Left cardiac atrium (tissue), 4 donors: ENCODE measurements at regions of chr6 and their contacts with region 1.

Region 1: DNA sequence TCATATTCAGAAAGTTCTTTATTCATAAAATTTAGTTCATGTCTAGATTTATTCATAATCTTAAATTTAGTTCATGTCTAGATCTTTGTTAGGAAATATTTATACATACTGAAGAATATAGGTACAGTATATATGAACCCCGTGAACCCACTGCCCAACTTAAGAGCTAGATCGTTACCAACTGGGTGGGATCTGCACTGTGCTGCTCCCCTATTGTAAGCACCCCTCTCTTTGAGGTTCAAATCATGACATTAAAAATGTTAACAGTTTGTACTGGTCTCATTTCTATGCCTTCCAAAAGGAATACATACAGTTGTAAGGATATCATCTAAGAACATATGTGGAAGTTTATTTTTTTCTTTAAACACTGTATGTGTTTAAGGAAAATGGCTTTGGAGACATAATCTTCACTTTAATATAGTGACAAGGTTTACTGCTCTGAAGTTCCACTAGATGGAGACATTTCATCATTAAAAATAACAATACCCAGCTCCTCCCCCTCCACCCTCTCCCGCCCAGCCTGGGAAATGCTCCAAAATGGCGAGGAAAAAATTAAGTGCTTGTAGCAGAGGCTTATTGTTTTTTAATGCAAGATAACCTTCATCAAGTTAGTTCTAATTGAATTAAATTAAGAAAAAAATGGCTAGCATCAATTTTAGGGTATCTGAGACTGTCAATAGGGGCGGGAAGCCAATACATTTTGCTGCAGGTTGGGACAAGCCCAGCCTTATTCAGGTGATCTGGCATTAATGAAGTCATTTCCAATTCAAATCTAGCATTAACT is 104.1 kb upstream of the TRAF3IP2 start:
- DNase-seq: peak; percentile 63
- ATAC-seq: peak; percentile 78 to 85

Region 2: GRCh38 chr6:111781041-111781708 is 71.4 kb after region 1 on chr6:
- intact Hi-C with region 1: loop called in 1 of 2 experiments (anchors 10 kb)
- DNase-seq: no peak
- ATAC-seq: peak; percentile 45 to 61

Region 3: DNA sequence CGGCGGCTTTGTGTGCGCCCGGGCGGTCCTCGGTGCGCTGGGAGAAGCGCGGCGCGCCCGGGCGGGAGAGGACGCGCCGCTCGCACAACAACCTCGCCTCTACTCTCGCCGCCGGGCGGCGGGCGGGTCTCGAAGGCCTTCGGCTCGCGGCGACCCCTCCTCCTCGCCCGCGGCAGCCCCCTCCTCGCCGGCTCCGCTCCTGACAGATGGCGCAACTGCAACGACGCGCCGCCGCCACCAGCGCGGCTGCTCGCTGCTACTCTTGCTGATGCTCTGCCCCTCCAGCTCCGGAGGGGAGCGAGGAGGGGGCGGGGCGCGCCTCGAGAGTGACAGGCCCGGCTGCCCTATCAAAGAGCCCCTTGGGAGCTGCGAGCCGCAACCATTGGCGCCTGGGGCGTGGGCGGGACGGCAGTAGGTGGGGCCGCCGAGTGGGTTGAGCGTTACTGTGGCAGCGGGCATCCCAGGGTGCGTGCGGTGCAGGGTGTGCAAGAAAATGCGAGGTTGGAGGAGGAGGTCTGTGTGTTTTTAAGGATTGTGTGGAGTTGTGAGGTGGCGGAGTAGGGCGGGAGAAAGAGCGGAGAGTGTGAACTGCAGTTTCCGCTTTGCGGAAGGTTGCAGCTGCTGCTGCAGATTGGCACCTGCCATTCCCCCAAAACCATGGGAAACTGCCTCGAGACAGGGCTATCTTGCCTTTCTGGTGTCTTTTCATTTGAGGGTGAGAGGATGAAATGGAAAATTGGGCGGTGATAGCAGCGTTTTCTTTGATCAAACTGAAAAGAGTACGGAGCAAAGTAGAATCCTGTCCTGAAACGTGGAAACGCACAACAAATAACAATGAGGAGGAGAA is 163.6 kb after region 1 on chr6 and contains the start of gene FYN:
- intact Hi-C with region 1: loop called (anchors 5 to 10 kb)
- DNase-seq: peak; percentile 99
- ATAC-seq: peak; percentile 99
- total RNA-seq, gene FYN: 60.4 to 75.8 TPM

Region 4: DNA sequence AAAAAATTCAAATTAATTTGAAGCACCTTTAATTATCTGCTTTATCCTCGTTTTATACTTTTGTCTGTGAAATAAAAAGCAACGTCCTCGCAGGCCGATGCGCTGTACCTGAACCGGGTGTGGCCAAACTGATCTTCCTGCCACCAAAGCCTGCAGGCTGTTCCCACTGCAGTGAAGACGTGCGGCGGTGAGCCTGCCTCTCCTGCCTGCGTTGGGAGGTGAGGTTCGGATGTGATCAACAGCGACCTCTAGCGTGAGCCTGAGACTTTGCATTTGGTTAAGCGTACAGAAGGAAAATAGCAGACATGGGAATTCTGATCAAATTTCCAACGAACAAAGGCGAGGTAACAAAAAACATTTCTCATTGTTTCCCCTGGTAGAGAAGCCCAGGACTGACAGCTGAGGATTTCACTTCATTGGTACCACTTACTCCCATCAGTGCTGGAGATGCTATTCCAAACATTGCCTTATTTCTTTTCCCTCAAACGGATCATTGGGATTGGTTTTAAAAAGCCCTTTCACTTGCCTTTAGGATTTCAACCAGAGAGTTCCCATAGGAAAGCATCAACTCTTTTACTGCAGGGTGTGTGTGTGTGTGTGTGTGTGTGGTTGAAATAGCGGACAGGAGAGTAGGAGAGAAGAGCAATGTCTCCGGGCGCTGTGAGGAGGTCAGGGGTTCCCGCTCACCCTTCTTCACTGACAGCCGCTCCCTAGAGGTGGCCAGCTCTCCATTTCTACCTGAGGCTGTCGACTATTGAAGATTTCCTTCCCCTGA is 287.5 kb after region 1 on chr6:
- intact Hi-C with region 1: loop called (anchors 1 to 2 kb)
- DNase-seq: peak; percentile 86
- ATAC-seq: peak; percentile 94

Region 5: DNA sequence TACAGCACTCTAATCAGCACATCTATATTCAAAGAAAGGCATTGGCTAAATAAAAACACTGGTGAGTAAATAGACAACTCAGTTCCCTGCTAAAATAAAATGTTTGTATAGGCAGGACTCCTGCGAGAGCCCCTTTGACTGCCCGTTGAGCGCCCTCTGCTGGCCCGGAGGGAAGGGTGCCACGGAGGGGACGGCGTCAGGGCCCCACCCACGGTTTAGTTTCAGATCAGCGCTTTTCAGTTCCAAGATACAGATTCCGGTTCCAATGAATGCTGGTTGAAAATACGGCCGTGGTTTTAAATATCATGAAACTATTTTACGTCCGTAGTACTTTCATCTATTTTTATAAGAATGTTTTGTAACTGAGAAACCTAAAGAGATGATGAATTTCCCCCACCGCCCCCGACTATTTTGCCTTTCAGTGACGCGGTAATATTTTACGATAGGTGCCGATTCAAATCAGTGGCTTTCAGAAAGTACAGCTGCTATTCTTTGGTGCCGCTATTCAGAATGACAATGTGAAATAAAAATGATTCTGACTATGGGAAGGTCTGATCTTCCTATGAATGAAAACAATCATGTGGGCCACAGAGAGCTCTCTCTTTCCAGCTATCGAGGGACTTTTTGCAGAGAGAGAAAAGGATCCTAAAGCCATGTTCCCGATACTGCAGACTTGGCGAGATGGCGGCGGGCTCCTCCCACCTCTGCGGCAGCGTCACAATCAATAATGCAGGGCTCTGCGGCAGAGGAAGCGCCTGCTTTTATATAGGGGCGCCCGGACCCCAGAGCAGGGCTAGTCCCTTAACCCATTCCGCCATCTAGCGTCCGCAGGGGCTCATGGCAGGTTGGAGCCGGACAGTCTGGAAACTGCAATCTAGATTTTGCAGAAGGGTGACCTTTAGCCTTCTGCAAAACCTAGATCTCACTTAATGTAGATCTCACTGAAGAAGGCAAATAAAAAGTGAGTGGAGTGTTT is 333.5 kb after region 1 on chr6:
- intact Hi-C with region 1: loop called in 1 of 2 experiments (anchors 2 kb)
- DNase-seq: peak; percentile 93
- ATAC-seq: peak; percentile 94 to 96